ENCODE measurements at regions of chr1 and their contacts with region 1.

Region 1: GRCh38 chr1:39258146-39258924 is 53.8 kb downstream of the MACF1 start:
- DNase-seq: peak; percentile 73
- ATAC-seq: peak; percentile 74
- H3K4me3 Mint-ChIP-seq: no peak overlapping the region
- H3K27ac Mint-ChIP-seq: peak overlapping the region; percentile 76
- H3K4me1 Mint-ChIP-seq: peaks cover 38% of the 10 kb centered on the region
- H3K27me3 Mint-ChIP-seq: no peaks in the 10 kb centered on the region
- CTCF ChIP-seq: peak; percentile 93

Region 2: GRCh38 chr1:39183503-39184353 is 74.6 kb before region 1 on chr1:
- CTCF ChIA-PET with region 1: interaction called, 371 read pairs
- POLR2A ChIA-PET with region 1: interaction called, 4 read pairs
- intact Hi-C with region 1: no loop called
- DNase-seq: peak; percentile 93
- ATAC-seq: peak; percentile 84
- H3K4me3 Mint-ChIP-seq: peak overlapping the region; percentile 32
- H3K27ac Mint-ChIP-seq: peak overlapping the region; percentile 94
- H3K4me1 Mint-ChIP-seq: peaks cover 46% of the 10 kb centered on the region
- H3K27me3 Mint-ChIP-seq: no peaks in the 10 kb centered on the region
- CTCF ChIP-seq: peak; percentile 61

Region 3: DNA sequence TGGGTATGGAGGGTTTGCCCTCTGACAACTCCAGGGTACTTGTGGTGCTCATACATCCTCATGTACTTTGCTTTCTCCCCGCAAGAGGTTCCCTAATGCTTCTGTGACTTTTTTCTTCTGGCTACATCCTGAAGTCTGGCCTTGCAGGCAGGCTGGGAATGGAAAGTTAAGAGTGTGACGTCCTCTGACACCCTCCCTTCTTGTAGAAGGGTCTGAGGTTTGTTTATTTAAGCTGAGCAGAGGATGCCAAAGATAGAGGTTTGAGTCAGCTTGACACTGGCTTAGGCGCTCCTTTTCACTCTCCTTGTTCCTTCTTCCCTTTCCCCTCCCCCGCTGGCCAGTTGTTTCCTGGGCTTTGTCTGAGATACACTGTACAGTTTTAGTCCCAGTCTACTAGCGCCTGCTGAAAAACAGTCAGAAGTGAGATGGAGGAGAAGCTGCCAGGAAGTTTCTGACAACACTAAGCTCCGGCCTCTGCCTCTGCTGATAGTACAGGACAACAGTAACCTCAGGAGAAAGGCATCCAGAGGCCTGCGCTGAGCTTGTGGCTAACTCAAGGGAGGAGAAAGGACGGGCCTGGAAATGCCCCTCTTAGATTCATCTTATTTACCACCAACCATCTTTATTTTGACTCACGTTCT is 53.8 kb before region 1 on chr1 and contains the start of gene MACF1:
- CTCF ChIA-PET with region 1: interaction called, 47 read pairs
- POLR2A ChIA-PET with region 1: interaction called, 5 read pairs
- intact Hi-C with region 1: no loop called
- DNase-seq: peak; percentile 65
- ATAC-seq: peak; percentile 48
- H3K4me3 Mint-ChIP-seq: peak within 1 kb of the TSS; percentile 84
- H3K27ac Mint-ChIP-seq: peak within 1 kb of the TSS; percentile 95
- H3K4me1 Mint-ChIP-seq: peaks cover 42% of the 10 kb centered on the region
- H3K27me3 Mint-ChIP-seq: no peaks in the 10 kb centered on the region
- CTCF ChIP-seq: no peak
- total RNA-seq, gene MACF1: 201 to 215 TPM

Region 4: GRCh38 chr1:39214998-39215873 is 43.1 kb before region 1 on chr1:
- CTCF ChIA-PET with region 1: interaction called, 28 read pairs
- POLR2A ChIA-PET with region 1: interaction called, 3 read pairs
- intact Hi-C with region 1: no loop called
- DNase-seq: peak; percentile 65
- ATAC-seq: peak; percentile 75
- H3K4me3 Mint-ChIP-seq: peak overlapping the region; percentile 79
- H3K27ac Mint-ChIP-seq: peak overlapping the region; percentile 90
- H3K4me1 Mint-ChIP-seq: peaks cover 45% of the 10 kb centered on the region
- H3K27me3 Mint-ChIP-seq: no peaks in the 10 kb centered on the region
- CTCF ChIP-seq: no peak

Region 5: DNA sequence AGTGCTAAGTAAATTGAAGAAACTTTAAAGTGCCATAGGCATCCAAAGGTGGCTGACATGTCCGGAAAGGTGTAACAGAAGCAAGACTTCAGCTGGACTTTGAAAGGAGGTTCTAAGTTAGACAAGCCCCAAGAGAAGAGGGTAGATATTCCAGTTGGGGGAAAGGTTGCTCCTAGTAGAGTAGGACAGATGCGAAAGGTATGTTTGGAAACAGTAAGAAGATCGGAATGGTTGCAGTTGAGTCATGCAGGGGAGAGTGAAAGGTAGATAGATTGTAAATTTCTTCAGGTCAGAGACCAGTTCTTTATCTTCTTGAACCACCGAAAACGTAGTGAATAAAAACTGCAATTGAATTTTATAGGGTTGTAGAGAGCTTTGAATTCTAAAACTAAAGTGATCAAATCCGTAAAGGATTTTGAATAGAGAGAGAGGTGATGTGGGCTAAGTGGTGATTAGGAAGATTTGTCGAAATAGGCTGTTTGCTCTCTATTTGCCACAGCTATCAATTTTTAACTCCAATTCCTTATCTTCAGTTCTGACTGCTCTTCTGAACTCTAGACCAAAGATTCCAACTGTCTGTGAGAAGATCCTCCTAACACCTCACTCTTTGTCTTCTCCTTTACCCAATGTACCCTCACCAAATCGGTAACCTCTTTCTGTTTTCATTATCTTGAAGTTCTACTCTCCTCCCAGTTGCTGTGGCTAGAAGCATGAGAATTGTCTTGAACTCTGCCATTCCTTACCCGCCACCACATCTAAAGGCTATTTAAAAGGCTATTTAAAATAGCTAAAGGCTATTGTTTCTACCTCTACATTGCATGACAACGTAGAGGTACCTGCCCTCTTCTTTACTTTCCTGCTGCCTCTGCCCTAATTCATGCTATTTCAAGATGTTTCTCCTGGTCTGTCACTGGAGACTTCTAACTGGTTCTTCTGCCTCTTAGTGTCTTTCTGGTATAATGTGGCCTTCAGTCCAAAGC is 37.2 kb before region 1 on chr1:
- CTCF ChIA-PET with region 1: interaction called, 28 read pairs
- POLR2A ChIA-PET with region 1: interaction called, 3 read pairs
- intact Hi-C with region 1: no loop called
- DNase-seq: no peak
- ATAC-seq: no peak
- H3K4me3 Mint-ChIP-seq: no peak overlapping the region
- H3K27ac Mint-ChIP-seq: no peak overlapping the region
- H3K4me1 Mint-ChIP-seq: peaks cover 63% of the 10 kb centered on the region
- H3K27me3 Mint-ChIP-seq: no peaks in the 10 kb centered on the region
- CTCF ChIP-seq: no peak

Region 6: DNA sequence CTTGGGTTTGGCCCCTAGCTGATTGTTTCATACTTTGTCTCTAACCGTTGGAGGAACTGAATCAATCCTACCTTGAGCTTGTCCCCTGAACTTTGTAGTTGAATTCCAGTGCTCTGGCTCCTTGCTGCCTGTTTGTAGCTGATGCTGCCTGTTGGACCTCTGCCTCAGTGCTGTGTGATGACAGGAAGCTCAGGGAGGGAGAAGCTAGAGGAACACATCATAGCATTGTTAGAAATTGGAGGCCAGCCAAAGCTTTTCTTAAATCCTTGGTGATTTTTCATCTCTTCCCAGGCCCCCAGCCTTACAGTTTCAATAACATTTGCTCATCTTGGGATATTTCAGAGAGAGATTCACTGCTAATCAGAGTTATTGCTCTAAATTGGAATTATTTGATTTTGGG is 19.9 kb before region 1 on chr1:
- CTCF ChIA-PET with region 1: interaction called, 14 read pairs
- POLR2A ChIA-PET with region 1: no interaction called
- intact Hi-C with region 1: no loop called
- DNase-seq: no peak
- ATAC-seq: no peak
- H3K4me3 Mint-ChIP-seq: no peak overlapping the region
- H3K27ac Mint-ChIP-seq: peak overlapping the region; percentile 26
- H3K4me1 Mint-ChIP-seq: peaks cover 34% of the 10 kb centered on the region
- H3K27me3 Mint-ChIP-seq: no peaks in the 10 kb centered on the region
- CTCF ChIP-seq: no peak

Region 7: GRCh38 chr1:39321979-39322378 is 63.6 kb after region 1 on chr1:
- CTCF ChIA-PET with region 1: no interaction called
- POLR2A ChIA-PET with region 1: no interaction called
- intact Hi-C with region 1: no loop called
- DNase-seq: no peak
- ATAC-seq: no peak
- H3K4me3 Mint-ChIP-seq: no peak overlapping the region
- H3K27ac Mint-ChIP-seq: peak overlapping the region; percentile 78
- H3K4me1 Mint-ChIP-seq: peaks cover 12% of the 10 kb centered on the region
- H3K27me3 Mint-ChIP-seq: no peaks in the 10 kb centered on the region
- CTCF ChIP-seq: no peak

Region 8: DNA sequence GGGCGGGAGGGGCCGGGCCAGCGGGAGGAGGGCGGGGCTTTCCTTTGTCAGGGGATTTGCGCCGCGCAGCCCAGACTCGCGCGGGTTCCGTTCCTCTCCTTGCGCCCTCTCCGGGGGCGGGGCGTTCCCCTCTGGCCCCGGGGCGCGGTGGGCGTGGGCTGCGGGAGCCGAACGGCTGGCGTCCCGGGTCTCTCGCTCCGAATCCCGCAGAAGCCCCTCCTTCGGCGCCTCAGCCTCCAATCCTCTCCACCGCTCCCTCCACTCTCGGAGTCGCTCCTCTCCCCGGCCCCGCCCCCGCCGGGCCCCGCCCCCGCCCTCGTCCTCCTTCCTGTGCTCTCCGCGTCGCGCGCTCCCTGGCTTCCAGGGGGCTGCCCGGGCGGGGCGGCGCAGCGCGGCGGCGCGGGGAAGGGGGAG is 150.3 kb after region 1 on chr1:
- CTCF ChIA-PET with region 1: interaction called, 10 read pairs
- POLR2A ChIA-PET with region 1: no interaction called
- intact Hi-C with region 1: no loop called
- DNase-seq: peak; percentile 84
- ATAC-seq: peak; percentile 85
- H3K4me3 Mint-ChIP-seq: peak overlapping the region; percentile 80
- H3K27ac Mint-ChIP-seq: no peak overlapping the region
- H3K4me1 Mint-ChIP-seq: peaks cover 67% of the 10 kb centered on the region
- H3K27me3 Mint-ChIP-seq: no peaks in the 10 kb centered on the region
- CTCF ChIP-seq: no peak

Measured in activated CD8-positive, alpha-beta T cell treated with anti-CD3 and anti-CD28 coated beads for 36 hours (primary cell).